Posterior vena cava (tissue), 2 donors: ENCODE measurements at regions of chr12 and their contacts with region 1.

Region 1: GRCh38 chr12:19498099-19498498 is 58.8 kb downstream of the AEBP2 start:
- DNase-seq: no peak

Region 2: DNA sequence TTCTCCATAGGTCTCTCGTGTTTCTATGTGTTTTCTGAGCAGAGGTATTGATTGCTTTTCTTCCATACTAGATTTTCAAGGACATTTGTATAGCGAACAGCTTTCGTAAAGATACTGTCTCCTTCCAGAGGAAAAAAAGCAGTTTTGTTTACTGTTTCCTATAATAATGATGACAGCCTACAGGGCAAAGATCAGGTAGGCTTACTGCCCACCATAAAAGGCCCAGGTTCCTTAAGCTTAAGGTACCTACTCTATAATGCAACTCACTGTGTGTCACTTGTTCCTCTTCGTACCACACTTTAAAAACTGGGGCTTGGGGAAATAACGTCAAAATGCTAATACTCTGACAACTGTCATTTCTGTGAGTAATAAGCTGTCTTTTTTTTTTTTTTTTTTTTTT is 766.9 kb before region 1 on chr12:
- intact Hi-C with region 1: no loop called
- DNase-seq: no peak

Region 3: GRCh38 chr12:19474147-19474546 is 24.0 kb before region 1 on chr12:
- intact Hi-C with region 1: loop called in 1 of 2 experiments (anchors 2 kb)
- DNase-seq: no peak